ENCODE measurements at regions of chr1 and their contacts with region 1.

Region 1: DNA sequence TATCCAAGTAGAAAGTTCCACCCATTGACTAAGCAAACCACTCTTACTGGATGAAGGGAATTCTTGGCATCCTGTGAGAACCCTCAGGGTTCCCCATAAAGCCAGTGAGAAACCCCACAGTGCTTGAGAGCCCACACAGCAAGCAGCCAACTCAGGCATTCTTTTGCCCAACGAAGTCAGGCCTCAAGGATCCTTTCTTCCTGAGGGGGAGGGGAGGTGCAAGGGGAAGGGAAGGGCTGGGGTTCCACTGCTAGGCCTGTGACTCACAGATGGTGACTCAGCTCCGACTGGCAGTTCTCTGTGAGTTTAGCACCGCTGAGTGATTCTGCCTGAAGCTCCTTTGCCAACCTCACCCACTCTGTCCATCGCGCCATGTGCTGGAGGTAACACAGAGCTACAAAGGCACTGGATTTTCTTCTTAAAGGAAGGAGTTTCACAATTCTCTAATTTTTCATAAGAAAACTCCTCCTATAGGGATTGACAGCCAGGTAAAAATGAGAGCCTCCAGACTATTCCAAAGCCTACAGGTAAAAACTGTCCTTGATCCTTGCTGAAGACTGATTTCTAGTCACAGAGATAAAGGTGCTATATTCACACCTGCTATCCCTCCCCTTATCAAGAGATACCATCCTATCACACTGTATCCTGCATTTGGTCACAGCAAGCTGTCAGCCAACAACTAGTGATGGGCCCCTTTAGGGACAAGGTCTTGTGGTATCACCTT is 4.8 kb downstream of the ENO1 start:
- DNase-seq: peak; percentile 84
- H3K4me3 Mint-ChIP-seq: peak overlapping the region; percentile 99
- H3K27ac Mint-ChIP-seq: peak overlapping the region; percentile 99
- H3K4me1 Mint-ChIP-seq: peaks cover 74% of the 10 kb centered on the region
- H3K27me3 Mint-ChIP-seq: no peaks in the 10 kb centered on the region

Region 2: GRCh38 chr1:8763888-8764287 is 109.8 kb before region 1 on chr1:
- CTCF ChIA-PET with region 1: no interaction called
- POLR2A ChIA-PET with region 1: no interaction called
- DNase-seq: no peak
- H3K4me3 Mint-ChIP-seq: no peak overlapping the region
- H3K27ac Mint-ChIP-seq: no peak overlapping the region
- H3K4me1 Mint-ChIP-seq: peaks cover 18% of the 10 kb centered on the region
- H3K27me3 Mint-ChIP-seq: no peaks in the 10 kb centered on the region

Region 3: DNA sequence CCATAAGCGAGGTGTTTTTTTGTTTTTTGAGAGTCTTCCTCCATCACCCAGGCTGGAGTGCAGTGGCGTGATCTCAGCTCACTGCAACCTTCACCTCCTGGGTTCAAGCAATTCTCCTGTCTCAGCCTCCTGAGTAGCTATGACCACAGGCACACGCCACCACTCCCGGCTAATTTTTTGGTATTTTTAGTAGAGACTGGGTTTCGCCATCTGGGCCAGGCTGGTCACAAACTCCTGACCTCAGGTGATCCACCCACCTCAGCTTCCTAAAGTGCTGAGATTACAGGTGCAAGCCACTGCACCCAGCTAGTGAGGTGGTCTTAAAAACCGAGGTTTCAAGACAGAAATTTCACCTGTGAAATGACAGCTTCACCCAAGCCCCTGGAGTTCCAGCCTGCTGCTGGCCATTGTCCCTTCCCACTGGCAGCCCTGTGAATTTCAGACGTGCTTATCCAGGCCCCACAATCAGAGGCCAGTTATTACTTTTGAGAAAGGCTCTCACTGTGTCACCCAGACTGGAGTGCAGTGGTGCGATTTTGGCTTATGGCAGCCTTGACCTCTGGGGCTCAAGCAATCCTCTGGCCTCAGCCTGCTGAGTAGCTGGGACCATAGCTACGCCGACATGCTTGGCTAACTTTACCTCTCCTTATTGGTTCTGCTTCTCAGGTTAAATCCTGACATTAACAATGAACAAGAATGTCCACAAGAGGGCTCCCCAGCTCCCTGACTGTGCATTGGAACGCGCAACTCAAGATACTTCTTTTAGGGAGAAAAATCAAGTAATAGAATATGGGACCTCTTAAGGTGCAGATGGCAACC is 14.6 kb before region 1 on chr1:
- CTCF ChIA-PET with region 1: interaction called, 38 read pairs
- POLR2A ChIA-PET with region 1: interaction called, 221 read pairs
- DNase-seq: peak; percentile 54
- H3K4me3 Mint-ChIP-seq: no peak overlapping the region
- H3K27ac Mint-ChIP-seq: peak overlapping the region; percentile 77
- H3K4me1 Mint-ChIP-seq: peaks cover 56% of the 10 kb centered on the region
- H3K27me3 Mint-ChIP-seq: no peaks in the 10 kb centered on the region

Region 4: DNA sequence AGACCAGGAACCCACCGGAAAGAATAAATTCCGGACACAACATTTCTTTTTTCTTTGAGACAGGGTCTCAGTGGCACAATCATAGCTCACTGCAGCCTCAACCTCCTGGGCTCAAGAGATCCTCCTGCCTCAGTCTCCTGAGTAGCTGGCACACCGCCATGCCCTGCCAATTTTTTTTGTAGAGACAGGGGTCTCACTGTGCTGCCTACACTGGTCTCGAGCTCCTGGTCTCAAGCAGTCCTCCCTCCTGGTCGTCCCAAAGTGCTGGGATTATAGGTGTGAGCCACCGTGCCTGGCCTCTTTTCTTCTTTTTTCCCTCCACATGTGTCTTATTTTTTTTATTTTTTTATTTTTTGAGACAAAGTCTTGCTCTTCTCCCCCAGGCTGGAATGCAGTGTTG is 25.4 kb after region 1 on chr1:
- CTCF ChIA-PET with region 1: interaction called, 19 read pairs
- POLR2A ChIA-PET with region 1: interaction called, 106 read pairs
- DNase-seq: no peak
- H3K4me3 Mint-ChIP-seq: no peak overlapping the region
- H3K27ac Mint-ChIP-seq: peak overlapping the region; percentile 99
- H3K4me1 Mint-ChIP-seq: peaks cover 48% of the 10 kb centered on the region
- H3K27me3 Mint-ChIP-seq: no peaks in the 10 kb centered on the region